Panc1 (cell line): ENCODE measurements at regions of chr17 and their contacts with region 1.

Region 1: GRCh38 chr17:66691644-66692420 is 143.1 kb upstream of the CACNG5 start:
- DNase-seq: peak; percentile 82
- ATAC-seq: peak; percentile 94
- H3K4me3 ChIP-seq: peak overlapping the region in 1 of 2 experiments; percentile 18; a peak in 1 of 4 replicates
- H3K27ac ChIP-seq: peak overlapping the region; percentile 68
- H3K4me1 ChIP-seq: peaks cover 24% of the 10 kb centered on the region
- H3K27me3 ChIP-seq: no peaks in the 10 kb centered on the region
- CTCF ChIP-seq: no peak

Region 2: GRCh38 chr17:66667491-66668030 is 24.3 kb before region 1 on chr17:
- CTCF ChIA-PET with region 1: no interaction called
- POLR2A ChIA-PET with region 1: no interaction called
- in situ Hi-C with region 1: no loop called
- intact Hi-C with region 1: no loop called
- DNase-seq: no peak
- ATAC-seq: no peak
- H3K4me3 ChIP-seq: no peak overlapping the region
- H3K27ac ChIP-seq: no peak overlapping the region
- H3K4me1 ChIP-seq: no peaks in the 10 kb centered on the region
- H3K27me3 ChIP-seq: no peaks in the 10 kb centered on the region
- CTCF ChIP-seq: no peak

Region 3: GRCh38 chr17:66915204-66916096 is 223.6 kb after region 1 on chr17:
- CTCF ChIA-PET with region 1: interaction called, 17 read pairs
- POLR2A ChIA-PET with region 1: no interaction called
- in situ Hi-C with region 1: no loop called
- intact Hi-C with region 1: no loop called
- DNase-seq: no peak
- ATAC-seq: peak; percentile 94
- H3K4me3 ChIP-seq: no peak overlapping the region
- H3K27ac ChIP-seq: no peak overlapping the region
- H3K4me1 ChIP-seq: no peaks in the 10 kb centered on the region
- H3K27me3 ChIP-seq: no peaks in the 10 kb centered on the region
- CTCF ChIP-seq: peak; percentile 67